Activated CD4-positive, alpha-beta T cell treated with anti-CD3 and anti-CD28 coated beads for 36 hours (primary cell): ENCODE measurements at regions of chr3 and their contacts with region 1.

Region 1: GRCh38 chr3:40452876-40453730 is 4.0 kb upstream of the RPL14 start:
- DNase-seq: peak; percentile 98
- ATAC-seq: peak; percentile 94
- H3K4me3 Mint-ChIP-seq: peak overlapping the region; percentile 96
- H3K27ac Mint-ChIP-seq: peak overlapping the region; percentile 96
- H3K4me1 Mint-ChIP-seq: peaks cover 30% of the 10 kb centered on the region
- H3K27me3 Mint-ChIP-seq: no peaks in the 10 kb centered on the region

Region 2: DNA sequence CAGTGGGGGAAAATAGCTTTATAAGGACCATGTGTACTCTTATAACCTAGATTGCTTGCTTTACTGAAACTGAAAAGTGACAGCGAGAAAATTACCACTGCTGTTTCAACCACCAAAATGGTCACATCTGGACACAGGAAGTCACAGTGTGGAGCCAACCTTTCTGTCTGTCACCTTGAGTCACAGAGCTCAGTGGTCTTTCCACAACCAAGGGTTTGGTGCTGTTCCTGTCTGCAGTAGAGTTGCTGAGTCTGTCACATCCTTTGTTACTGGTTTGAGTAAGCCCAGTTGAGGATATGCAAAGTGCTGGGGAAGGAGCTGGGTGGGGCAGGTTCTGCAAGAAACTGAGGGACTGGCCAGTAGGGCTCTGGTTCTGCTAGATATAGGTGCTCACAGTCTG is 282.7 kb before region 1 on chr3:
- CTCF ChIA-PET with region 1: no interaction called
- POLR2A ChIA-PET with region 1: no interaction called
- intact Hi-C with region 1: no loop called
- DNase-seq: no peak
- ATAC-seq: peak; percentile 58
- H3K4me3 Mint-ChIP-seq: no peak overlapping the region
- H3K27ac Mint-ChIP-seq: no peak overlapping the region
- H3K4me1 Mint-ChIP-seq: no peaks in the 10 kb centered on the region
- H3K27me3 Mint-ChIP-seq: peaks cover 4% of the 10 kb centered on the region

Region 3: DNA sequence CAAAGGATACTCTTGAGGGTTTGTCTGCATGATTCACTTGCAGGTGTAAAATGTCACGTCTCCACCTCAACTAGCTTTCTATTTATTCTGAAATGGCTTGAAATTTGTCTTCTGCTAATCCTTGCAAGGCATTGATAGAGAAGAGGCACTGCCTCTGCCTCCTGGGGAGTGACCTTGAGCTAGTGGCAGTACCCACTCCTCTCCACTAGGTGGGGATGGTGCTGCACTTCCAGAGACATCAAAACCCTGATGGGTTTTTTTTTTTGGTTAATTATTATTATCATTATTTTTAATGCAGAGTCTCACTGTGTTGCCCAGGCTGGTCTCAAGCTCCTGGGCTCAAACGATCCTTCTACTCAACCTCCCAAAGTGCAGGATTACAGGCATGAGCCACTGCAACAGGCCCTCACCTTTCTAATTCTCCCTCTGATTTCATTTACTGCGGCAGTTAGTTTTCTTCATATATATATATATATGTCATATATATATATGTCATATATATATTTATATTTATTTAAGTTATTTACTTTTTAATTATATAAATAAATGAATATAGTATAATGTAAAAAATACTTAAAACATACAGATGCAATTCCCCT is 261.2 kb before region 1 on chr3:
- CTCF ChIA-PET with region 1: no interaction called
- POLR2A ChIA-PET with region 1: no interaction called
- intact Hi-C with region 1: loop called in 1 of 2 experiments (anchors 5 kb)
- DNase-seq: peak; percentile 72
- ATAC-seq: peak; percentile 57
- H3K4me3 Mint-ChIP-seq: no peak overlapping the region
- H3K27ac Mint-ChIP-seq: no peak overlapping the region
- H3K4me1 Mint-ChIP-seq: no peaks in the 10 kb centered on the region
- H3K27me3 Mint-ChIP-seq: no peaks in the 10 kb centered on the region

Region 4: DNA sequence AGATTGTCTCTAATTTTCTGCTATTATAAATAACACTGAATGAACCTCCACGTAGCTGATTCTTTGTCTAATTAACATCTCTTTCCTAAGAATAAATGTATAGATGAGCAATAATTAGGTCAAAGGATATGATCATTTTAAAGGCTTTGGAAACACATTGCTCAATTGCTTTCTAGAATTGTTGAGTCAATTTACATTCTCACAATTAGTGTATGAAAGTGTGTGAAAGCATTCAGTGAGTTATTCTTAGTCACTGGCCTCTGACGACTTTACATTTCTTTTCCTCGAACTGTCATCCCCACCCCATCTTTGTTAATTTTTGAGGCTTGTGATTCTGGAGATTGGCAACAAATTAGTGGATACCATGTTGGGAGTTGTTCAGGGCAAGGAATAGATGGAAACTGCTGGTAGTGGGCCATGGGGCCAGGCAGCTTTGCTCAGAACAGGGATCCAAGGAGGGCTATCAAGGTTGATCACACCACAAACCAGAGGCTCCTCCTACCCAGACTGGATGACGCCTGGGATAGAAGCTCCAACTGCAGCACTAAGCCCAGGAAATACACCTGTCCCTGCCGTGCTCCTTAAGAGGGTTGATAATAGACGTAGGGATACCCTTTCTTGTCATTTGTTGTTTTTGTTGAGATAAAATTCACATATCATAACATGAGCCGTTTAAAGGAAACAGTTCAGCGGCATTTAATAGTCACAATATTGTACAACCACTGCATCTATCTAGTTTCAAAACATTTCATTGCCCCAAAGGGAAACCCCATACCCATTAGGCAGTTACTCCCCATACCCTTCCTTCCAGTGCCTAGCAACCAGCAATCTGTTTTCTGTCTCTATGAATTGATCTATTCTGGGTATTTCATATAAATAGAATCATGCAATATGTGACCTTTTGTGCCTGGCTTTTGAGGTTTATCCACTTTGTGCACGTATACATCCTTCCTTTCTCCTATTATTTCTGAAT is 115.7 kb before region 1 on chr3:
- CTCF ChIA-PET with region 1: no interaction called
- POLR2A ChIA-PET with region 1: no interaction called
- intact Hi-C with region 1: loop called in 1 of 2 experiments (anchors 1 kb)
- DNase-seq: peak; percentile 36
- ATAC-seq: peak; percentile 86
- H3K4me3 Mint-ChIP-seq: no peak overlapping the region
- H3K27ac Mint-ChIP-seq: peak overlapping the region; percentile 69
- H3K4me1 Mint-ChIP-seq: peaks cover 20% of the 10 kb centered on the region
- H3K27me3 Mint-ChIP-seq: peaks cover 7% of the 10 kb centered on the region

Region 5: DNA sequence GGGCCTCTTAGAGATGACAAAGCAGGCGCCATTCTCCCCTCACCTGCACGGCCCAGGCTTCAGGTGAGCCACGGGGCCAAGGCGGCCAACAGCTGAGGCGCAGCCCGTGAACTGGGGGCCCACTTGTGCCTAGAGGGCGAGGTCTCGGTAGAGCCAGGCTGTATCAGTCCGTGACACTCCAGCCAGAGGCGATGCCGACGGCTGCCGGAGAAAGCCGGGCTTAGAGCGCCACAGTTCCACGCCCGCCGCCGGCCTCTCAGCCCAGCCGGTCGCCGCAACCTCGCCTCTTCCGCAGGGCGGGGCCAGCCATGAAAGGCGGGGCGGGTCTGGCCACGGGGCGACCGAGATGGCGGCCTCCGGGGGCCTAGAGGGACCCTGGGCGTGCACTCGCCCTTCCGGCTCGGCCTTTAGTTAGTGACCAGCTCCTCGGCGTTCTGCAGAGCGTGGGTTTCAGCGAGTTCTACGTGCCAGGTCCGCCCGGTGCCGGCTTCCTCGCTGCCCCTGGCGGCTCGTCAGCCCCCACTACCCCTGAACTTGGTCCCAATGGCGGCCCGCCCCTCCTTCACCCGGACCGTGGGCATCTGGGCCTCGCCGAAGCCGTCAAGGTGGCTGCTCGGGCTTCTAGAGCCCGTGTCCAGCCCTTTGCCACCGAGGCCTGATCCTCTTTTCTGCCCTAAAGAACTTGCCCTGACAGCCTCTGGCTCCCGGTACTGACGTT is 71.6 kb after region 1 on chr3 and contains the start of gene ZNF621:
- CTCF ChIA-PET with region 1: interaction called, 4 read pairs
- POLR2A ChIA-PET with region 1: no interaction called
- intact Hi-C with region 1: loop called (anchors 1 to 2 kb)
- DNase-seq: peak; percentile 89
- ATAC-seq: peak; percentile 97
- H3K4me3 Mint-ChIP-seq: peak within 1 kb of the TSS; percentile 91
- H3K27ac Mint-ChIP-seq: peak within 1 kb of the TSS; percentile 94
- H3K4me1 Mint-ChIP-seq: peaks cover 24% of the 10 kb centered on the region
- H3K27me3 Mint-ChIP-seq: no peaks in the 10 kb centered on the region
- total RNA-seq, gene ZNF621: 17.8 to 18.7 TPM

Region 6: DNA sequence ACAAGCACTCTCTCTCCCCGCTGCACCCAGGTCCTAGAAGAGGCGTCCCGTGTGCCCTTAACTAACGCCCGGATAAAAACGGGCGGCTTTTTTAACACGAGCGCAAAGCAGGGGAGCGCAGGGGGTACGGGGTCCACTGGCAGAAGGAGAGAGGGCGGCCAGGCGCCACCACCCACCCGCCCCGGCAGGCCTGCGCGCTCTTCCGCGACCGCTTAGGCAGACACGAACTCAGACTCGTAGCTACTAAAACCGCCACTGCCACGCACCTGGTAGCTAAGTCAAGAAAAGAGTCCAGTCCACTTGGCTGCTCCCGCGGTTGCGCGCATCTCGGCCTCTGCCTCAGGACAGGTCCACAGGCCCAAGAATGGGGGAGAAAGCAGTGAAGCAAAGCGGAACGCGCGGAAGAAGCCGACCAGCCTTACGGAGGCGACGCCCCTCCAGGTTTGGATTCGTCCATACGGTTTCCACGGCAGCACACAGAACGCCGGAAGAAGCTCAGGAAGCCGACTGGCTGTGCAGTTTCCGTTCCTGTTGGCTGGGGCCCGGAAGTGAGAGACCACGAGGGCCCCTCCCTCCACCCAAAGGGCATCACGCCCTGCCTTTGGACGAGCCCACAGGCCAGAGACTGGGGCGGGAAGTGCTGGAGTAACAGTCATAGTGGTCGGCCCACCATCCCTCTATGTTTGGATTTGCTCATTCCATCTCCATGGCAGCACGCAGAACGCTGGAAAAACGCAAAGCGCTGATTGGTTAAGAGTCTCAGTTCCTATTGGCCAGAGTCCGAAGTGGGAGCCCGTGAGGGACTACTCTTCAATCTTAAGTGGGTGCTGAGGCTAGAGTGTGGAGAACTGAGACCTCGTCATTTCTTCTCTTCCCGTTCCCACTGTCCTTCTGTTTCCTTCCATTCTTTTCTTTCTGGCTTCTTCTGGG is 1508.9 kb after region 1 on chr3 and contains the start of gene ULK4:
- CTCF ChIA-PET with region 1: no interaction called
- POLR2A ChIA-PET with region 1: no interaction called
- intact Hi-C with region 1: loop called (anchors 1 to 2 kb)
- DNase-seq: peak; percentile 96
- ATAC-seq: peak; percentile 91
- H3K4me3 Mint-ChIP-seq: peak within 1 kb of the TSS; percentile 95
- H3K27ac Mint-ChIP-seq: peak within 1 kb of the TSS; percentile 92
- H3K4me1 Mint-ChIP-seq: peaks cover 13% of the 10 kb centered on the region
- H3K27me3 Mint-ChIP-seq: no peaks in the 10 kb centered on the region
- total RNA-seq, gene ULK4: 13.1 to 14.2 TPM